Mammary epithelial cell (primary cell): ENCODE measurements at regions of chr2 and their contacts with region 1.

Region 1: DNA sequence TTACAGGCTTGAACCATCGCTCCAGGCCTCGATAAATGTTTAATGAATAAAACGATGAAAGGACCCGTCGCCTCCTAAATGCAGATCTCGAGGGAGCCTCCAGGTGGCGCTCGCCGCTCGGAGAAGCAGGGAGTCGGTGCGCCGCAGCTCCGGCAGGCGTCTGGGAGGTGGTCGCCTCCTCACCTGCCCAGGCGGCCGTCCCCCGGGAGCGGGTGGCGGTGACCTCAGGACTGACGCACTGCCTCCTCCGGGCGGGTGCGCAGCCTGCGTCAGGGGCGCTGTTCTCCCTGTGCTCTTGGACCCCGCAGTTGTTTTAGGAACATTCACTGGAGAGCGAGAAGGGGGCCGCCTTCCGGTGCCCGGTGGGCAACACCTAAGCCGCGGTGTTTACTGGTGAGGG is 38.6 kb upstream of the POLE4 start:
- DNase-seq: peak; percentile 26
- H3K4me3 ChIP-seq: peak overlapping the region; percentile 9 to 46 (median 44)
- H3K27ac ChIP-seq: no peak overlapping the region
- H3K4me1 ChIP-seq: peaks cover 31% of the 10 kb centered on the region
- H3K27me3 ChIP-seq: no peaks in the 10 kb centered on the region
- CTCF ChIP-seq: peak; percentile 68 to 73

Region 2: DNA sequence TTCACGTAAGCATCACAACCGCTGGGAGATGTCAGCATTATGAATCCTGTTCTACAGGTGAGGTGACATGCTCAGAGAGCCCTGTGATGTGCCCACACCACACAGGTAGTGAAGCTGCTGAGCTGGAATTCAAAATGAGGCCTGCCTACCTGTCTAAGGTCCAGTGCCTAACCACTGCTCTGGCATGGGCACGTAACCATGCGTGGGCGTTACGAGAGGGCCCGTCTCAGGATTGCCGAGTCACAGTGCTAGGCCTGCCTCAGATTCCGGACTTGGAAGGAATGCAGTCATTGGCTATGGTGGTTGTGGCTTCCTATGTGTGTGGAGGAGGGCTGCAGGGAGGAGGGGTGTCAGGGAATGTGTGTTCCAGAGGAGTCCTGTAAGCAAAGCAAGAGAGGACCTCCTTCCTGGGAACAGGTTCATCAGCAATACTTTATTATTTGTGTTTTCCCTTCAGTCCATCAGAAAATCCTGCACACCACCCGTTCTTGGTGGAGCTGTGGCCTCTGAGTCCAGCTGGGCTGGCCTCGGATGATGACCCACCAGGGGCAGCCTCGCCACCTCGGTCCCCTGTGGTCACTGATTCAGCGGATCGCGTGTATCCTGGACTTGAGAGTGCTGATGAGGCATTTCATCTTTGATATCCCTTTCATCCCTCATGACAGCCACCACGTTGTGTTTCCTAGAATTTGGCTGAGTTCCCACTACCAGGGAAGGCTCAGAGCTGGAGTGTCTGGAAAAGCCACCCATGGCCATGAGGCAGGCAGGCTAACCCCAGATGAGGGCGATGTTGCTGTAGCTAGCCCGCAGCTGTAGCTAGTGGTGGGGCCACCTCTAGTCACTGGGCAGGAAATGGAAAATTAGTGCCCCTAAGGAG is 54.7 kb before region 1 on chr2:
- CTCF ChIA-PET with region 1: no interaction called
- dilution Hi-C with region 1: no loop called
- in situ Hi-C with region 1: no loop called
- intact Hi-C with region 1: no loop called
- DNase-seq: peak; percentile 89
- H3K4me3 ChIP-seq: no peak overlapping the region
- H3K27ac ChIP-seq: peak overlapping the region; percentile 52
- H3K4me1 ChIP-seq: peaks cover 26% of the 10 kb centered on the region
- H3K27me3 ChIP-seq: no peaks in the 10 kb centered on the region
- CTCF ChIP-seq: peak in 1 of 2 donors; percentile 16

Region 3: DNA sequence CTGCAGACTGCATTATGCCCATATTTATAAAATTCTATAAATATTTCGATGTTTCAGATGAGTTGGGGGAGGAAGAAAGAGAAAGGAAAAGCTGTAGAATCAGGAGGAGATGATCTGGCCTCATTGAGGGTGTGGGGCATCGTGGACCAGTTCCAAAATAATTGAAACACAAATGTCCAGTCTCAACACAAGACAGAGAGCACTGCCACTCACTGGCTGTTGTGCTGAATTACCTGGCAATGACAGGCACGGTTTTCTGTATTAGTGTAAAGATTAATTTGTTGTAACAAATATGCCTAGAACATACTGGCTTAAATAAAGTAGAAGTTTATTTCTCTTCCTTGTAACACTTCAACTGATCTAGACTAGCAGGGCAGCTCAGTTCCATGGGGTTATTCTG is 62.8 kb after region 1 on chr2:
- CTCF ChIA-PET with region 1: no interaction called
- dilution Hi-C with region 1: no loop called
- in situ Hi-C with region 1: no loop called
- intact Hi-C with region 1: loop called (anchors 1 kb)
- DNase-seq: peak; percentile 12
- H3K4me3 ChIP-seq: no peak overlapping the region
- H3K27ac ChIP-seq: no peak overlapping the region
- H3K4me1 ChIP-seq: no peaks in the 10 kb centered on the region
- H3K27me3 ChIP-seq: no peaks in the 10 kb centered on the region
- CTCF ChIP-seq: peak; percentile 30 to 55

Region 4: GRCh38 chr2:75064691-75065396 is 145.0 kb after region 1 on chr2:
- CTCF ChIA-PET with region 1: no interaction called
- dilution Hi-C with region 1: no loop called
- in situ Hi-C with region 1: no loop called
- intact Hi-C with region 1: loop called (anchors 1 kb)
- DNase-seq: peak; percentile 38
- H3K4me3 ChIP-seq: no peak overlapping the region
- H3K27ac ChIP-seq: no peak overlapping the region
- H3K4me1 ChIP-seq: no peaks in the 10 kb centered on the region
- H3K27me3 ChIP-seq: no peaks in the 10 kb centered on the region
- CTCF ChIP-seq: peak; percentile 89 to 96

Region 5: GRCh38 chr2:75241696-75242095 is 321.9 kb after region 1 on chr2:
- CTCF ChIA-PET with region 1: no interaction called
- dilution Hi-C with region 1: no loop called
- in situ Hi-C with region 1: no loop called
- intact Hi-C with region 1: loop called (anchors 2 kb)
- DNase-seq: peak; percentile 5
- H3K4me3 ChIP-seq: no peak overlapping the region
- H3K27ac ChIP-seq: no peak overlapping the region
- H3K4me1 ChIP-seq: no peaks in the 10 kb centered on the region
- H3K27me3 ChIP-seq: no peaks in the 10 kb centered on the region
- CTCF ChIP-seq: peak; percentile 26 to 35

Region 6: DNA sequence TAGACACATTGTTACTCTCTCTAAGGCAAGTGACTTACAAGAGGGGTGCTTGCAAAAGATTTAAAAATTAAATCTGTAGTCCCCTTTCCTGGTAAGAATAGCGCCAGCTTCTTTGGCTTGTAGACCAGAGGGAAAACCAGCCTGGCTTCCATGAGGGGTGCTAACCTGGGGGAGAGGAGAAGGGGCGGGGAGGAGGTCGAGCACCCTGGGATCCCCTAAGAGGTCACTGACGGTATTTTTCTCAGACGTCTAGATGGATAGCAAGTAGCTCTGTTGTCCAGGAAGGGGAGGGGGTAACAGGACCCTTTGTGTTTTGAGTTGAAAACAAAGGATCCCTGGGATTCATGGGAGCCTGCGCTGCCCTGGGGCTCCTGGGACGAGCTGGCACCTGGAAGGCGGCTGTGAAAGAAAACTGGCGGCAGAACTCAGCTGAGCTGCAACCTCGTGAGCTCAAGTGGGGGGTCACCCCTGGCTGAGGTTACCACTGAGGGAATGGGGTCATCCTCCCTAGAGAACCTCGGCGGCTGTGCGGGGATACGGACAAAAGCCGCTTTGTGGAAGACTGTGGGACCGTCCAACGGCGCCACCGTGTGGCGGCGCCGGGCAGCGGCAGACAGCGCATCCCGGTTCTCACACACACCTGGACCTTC is 689.0 kb after region 1 on chr2:
- CTCF ChIA-PET with region 1: no interaction called
- dilution Hi-C with region 1: no loop called
- in situ Hi-C with region 1: no loop called
- intact Hi-C with region 1: loop called (anchors 5 kb)
- DNase-seq: peak; percentile 58
- H3K4me3 ChIP-seq: peak overlapping the region in 1 of 3 experiments; percentile 30
- H3K27ac ChIP-seq: no peak overlapping the region
- H3K4me1 ChIP-seq: peaks cover 55% of the 10 kb centered on the region
- H3K27me3 ChIP-seq: no peaks in the 10 kb centered on the region
- CTCF ChIP-seq: peak; percentile 92 to 99